Calu3 (cell line): ENCODE measurements at regions of chr1 and their contacts with region 1.

Region 1: DNA sequence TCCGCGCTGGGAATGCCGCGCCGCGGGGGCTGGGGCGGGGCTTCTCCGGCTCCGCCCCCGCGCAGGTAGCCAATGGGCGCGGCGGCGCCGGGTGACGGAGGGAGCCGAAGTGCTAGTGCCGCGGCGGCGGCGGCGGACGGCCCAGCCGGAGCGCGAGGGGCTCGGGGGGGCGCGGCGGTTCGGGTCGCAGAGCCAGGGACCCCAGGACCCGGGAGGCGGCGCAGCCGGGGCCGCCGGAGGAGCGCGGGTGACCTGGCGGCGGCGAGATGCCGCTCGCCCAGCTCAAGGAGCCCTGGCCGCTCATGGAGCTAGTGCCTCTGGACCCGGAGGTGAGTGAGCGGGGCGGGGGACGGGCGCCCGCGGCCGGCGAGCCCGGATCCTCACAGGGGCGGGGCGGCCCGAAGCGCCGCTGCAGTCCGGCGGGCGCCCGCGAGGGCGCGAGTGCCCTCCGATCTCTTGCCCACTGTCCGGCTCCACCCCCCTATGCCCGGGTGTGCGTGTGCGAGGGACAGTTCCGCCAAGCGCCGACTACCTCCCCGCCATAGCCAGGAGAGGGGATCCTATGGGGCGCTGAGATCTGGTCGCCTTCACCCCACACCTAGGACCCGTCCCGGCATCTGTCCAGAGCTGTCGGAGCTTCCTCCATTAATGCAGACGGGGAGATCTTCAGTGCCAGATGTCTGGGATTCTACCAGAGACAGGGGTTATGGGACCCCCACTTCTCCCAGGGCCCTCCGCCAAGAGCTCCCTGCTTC is at the start of gene RPS6KA1:
- DNase-seq: peak; percentile 63
- H3K4me3 Mint-ChIP-seq: peak within 1 kb of the TSS; percentile 65
- H3K27ac Mint-ChIP-seq: peak within 1 kb of the TSS; percentile 59
- H3K4me1 Mint-ChIP-seq: peaks cover 14% of the 10 kb centered on the region
- H3K27me3 Mint-ChIP-seq: no peaks in the 10 kb centered on the region
- CTCF ChIP-seq: no peak
- total RNA-seq, gene RPS6KA1: 25.8 and 28.1 TPM in 2 replicates

Region 2: DNA sequence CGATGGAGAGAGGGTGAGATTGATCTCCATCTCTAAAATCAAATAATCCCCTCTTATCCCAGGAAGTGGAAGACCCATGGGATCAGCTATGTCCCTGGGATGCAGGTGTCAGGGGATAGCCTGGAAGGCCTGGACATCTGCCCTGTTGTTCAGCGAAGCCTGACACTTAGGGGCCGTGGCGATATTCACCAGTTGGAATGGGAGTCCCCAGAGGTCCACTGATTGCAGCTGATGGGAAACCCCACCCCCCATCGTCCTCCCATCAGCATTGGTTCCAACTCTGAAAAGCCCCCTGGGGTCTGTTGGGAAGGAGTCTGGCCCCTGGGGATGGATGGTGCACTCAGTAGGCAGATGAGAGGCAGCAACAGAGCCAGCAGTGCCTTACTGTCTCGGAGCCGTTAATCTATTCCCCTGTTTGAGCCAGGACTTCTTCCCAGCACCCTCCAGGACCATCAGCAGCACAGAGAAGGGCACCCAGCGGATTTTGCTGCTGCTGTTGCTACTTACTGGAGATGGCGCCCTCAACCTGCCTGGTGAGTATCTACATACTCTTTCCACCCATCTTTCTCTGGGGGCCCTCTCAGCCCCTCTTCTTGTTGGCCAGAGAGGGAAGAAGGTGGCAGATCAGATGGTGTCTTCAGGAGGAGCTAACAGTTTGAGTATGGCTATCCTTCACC is 326.1 kb before region 1 on chr1:
- CTCF ChIA-PET with region 1: no interaction called
- intact Hi-C with region 1: no loop called
- DNase-seq: no peak
- H3K4me3 Mint-ChIP-seq: no peak overlapping the region
- H3K27ac Mint-ChIP-seq: no peak overlapping the region
- H3K4me1 Mint-ChIP-seq: no peaks in the 10 kb centered on the region
- H3K27me3 Mint-ChIP-seq: peaks cover 62% of the 10 kb centered on the region
- CTCF ChIP-seq: no peak

Region 3: GRCh38 chr1:26500488-26501175 is 29.2 kb before region 1 on chr1:
- CTCF ChIA-PET with region 1: interaction called, 20 read pairs
- intact Hi-C with region 1: no loop called
- DNase-seq: peak; percentile 86
- H3K4me3 Mint-ChIP-seq: peak overlapping the region; percentile 80
- H3K27ac Mint-ChIP-seq: peak overlapping the region; percentile 70
- H3K4me1 Mint-ChIP-seq: no peaks in the 10 kb centered on the region
- H3K27me3 Mint-ChIP-seq: no peaks in the 10 kb centered on the region
- CTCF ChIP-seq: peak; percentile 18